CD8-positive, alpha-beta memory T cell (primary cell): ENCODE measurements at regions of chr2 and their contacts with region 1.

Region 1: GRCh38 chr2:38602732-38603401 is at the start of gene HNRNPLL:
- DNase-seq: peak; percentile 87 to 95 (median 89)
- H3K4me3 ChIP-seq: peak within 1 kb of the TSS; percentile 93
- H3K4me3 Mint-ChIP-seq: peak within 1 kb of the TSS; percentile 94 to 97 (median 96)
- H3K27ac ChIP-seq: peak within 1 kb of the TSS; percentile 82
- H3K27ac Mint-ChIP-seq: peak within 1 kb of the TSS; percentile 88 to 99 (median 97)
- H3K4me1 ChIP-seq: peaks cover 22% of the 10 kb centered on the region
- H3K4me1 Mint-ChIP-seq: peaks cover 45 to 58% (median 53%) of the 10 kb centered on the region in 3 donors
- H3K27me3 ChIP-seq: no peaks in the 10 kb centered on the region
- H3K27me3 Mint-ChIP-seq: peaks cover 0 to 2% of the 10 kb centered on the region in 2 donors
- total RNA-seq, gene HNRNPLL: 77.4 to 80.8 TPM

Region 2: DNA sequence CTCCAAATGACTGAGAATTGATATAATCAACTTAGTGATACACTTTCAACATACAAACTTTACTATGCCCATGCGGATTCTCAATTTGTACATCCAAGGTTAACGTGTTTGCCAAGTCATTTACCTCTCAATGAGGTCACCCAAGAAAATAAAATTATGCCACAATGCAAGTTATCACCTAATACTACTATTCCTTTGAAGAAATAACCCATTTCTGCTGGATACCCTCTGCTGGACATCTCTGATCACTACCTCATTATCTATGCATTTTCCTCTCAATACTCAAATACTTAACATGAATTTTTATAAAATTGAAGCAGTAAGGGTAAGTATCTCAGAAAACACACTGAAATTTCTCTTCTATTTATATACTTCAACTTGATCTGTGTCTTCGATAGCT is 12.8 kb before region 1 on chr2:
- CTCF ChIA-PET with region 1: interaction called, 96 read pairs
- POLR2A ChIA-PET with region 1: interaction called, 6 read pairs
- DNase-seq: no peak
- H3K4me3 ChIP-seq: no peak overlapping the region
- H3K4me3 Mint-ChIP-seq: peak overlapping the region; percentile 17 to 78 (median 72)
- H3K27ac ChIP-seq: peak overlapping the region; percentile 6
- H3K27ac Mint-ChIP-seq: peak overlapping the region; percentile 30 to 88 (median 72)
- H3K4me1 ChIP-seq: peaks cover 9% of the 10 kb centered on the region
- H3K4me1 Mint-ChIP-seq: peaks cover 67 to 84% (median 84%) of the 10 kb centered on the region in 3 donors
- H3K27me3 ChIP-seq: no peaks in the 10 kb centered on the region
- H3K27me3 Mint-ChIP-seq: no peaks in the 10 kb centered on the region

Region 3: DNA sequence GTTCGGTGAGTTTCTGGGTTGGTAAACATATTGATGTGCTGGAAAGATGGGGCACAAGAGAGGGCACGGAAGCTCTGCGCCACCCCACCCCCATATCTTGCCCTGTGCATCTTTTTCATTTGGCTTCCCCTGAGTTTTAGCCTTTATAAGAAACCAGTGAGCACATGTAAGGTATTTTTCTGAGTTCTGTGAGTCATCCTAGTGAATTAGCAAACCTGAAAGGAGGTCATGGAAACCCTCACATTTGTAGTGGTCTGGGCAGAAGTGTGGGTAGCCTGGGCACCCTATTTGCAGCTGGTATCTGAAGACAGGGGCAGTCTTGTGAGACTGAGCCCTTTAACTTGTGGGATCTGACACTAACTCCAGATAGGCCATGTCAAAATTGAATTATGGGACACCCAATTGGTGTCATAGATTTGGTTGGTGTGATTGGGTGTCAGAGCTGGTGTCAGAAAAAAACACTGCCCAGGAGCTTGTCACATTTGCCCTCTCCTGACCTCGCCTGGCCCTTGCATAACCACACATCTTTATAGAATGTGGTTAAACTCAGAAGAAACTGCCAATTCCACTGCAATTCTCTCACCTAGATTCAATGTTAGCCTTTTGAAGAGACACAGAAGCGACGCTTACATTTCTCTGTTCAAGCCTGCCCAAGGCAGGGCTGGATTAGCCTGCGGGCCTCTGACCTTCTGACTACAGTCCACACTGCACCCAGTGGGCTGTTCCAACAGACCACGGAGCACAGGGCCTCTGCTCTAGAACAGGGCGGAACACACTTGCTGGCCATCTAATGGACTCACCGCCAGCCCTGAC is 51.1 kb after region 1 on chr2:
- CTCF ChIA-PET with region 1: interaction called, 24 read pairs
- POLR2A ChIA-PET with region 1: interaction called, 5 read pairs
- DNase-seq: peak in 4 of 5 donors; percentile 25 to 65 (median 34)
- H3K4me3 ChIP-seq: peak overlapping the region; percentile 13
- H3K4me3 Mint-ChIP-seq: peak overlapping the region; percentile 1 to 87 (median 70)
- H3K27ac ChIP-seq: peak overlapping the region; percentile 20
- H3K27ac Mint-ChIP-seq: peak overlapping the region; percentile 85 to 98 (median 94)
- H3K4me1 ChIP-seq: peaks cover 29% of the 10 kb centered on the region
- H3K4me1 Mint-ChIP-seq: peaks cover 30 to 59% (median 51%) of the 10 kb centered on the region in 3 donors
- H3K27me3 ChIP-seq: no peaks in the 10 kb centered on the region
- H3K27me3 Mint-ChIP-seq: no peaks in the 10 kb centered on the region

Region 4: DNA sequence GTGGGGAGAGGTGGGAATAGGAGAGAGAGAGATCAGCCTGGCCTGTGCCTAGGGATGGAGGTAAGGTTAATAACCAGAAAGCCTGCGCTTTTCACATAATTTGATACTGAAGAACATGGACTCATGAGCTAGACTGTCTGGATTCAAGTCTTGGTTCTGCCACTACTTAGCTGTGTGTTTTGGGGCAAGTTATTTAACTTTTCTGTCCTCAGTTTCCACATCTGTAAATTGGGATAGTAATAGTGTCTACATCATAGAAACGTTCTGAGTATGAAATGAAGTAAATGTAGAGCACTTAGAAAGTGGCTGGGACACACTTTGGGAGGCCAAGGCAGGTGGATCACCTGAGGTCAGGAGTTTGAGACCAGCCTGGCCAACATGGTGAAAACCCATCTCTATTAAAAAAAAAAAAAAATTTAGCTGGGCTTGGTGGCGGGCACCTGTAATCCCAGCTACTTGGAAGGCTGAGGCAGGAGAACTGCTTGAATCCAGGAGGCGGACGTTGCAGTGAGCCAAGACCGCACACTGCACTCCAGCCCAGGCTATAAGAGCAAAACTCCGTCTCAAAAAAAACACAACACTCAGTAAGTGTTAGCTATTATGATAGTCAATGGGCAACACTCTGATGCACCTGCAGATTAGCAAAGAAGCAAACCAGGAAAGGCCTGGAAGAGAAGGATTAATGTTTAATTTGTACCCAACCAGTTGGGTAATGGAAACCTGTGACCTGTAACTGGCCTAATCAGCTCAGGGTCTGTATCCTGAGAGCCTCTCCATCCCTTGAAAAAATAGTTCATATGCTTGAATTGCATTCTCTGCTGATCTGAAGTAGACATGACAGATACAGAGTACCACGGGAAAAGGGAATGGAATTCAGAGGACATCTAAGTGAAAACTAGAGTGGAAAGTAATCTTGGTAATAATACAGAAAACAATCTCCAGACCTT is 69.9 kb after region 1 on chr2:
- CTCF ChIA-PET with region 1: interaction called, 36 read pairs
- POLR2A ChIA-PET with region 1: interaction called, 57 read pairs
- DNase-seq: no peak
- H3K4me3 ChIP-seq: no peak overlapping the region
- H3K4me3 Mint-ChIP-seq: peak overlapping the region in 5 of 7 donors; percentile 20 to 59 (median 53)
- H3K27ac ChIP-seq: no peak overlapping the region
- H3K27ac Mint-ChIP-seq: peak overlapping the region; percentile 57 to 92 (median 82)
- H3K4me1 ChIP-seq: peaks cover 33% of the 10 kb centered on the region
- H3K4me1 Mint-ChIP-seq: peaks cover 59 to 83% (median 80%) of the 10 kb centered on the region in 3 donors
- H3K27me3 ChIP-seq: no peaks in the 10 kb centered on the region
- H3K27me3 Mint-ChIP-seq: no peaks in the 10 kb centered on the region

Region 5: GRCh38 chr2:38697125-38697840 is 94.4 kb after region 1 on chr2:
- CTCF ChIA-PET with region 1: interaction called, 35 read pairs
- POLR2A ChIA-PET with region 1: no interaction called
- DNase-seq: peak in 4 of 5 donors; percentile 38 to 83 (median 60)
- H3K4me3 ChIP-seq: no peak overlapping the region
- H3K4me3 Mint-ChIP-seq: peak overlapping the region; percentile 60 to 81 (median 72)
- H3K27ac ChIP-seq: peak overlapping the region; percentile 61
- H3K27ac Mint-ChIP-seq: peak overlapping the region; percentile 93 to 100 (median 97)
- H3K4me1 ChIP-seq: peaks cover 60% of the 10 kb centered on the region
- H3K4me1 Mint-ChIP-seq: peaks cover 74 to 91% (median 90%) of the 10 kb centered on the region in 3 donors
- H3K27me3 ChIP-seq: no peaks in the 10 kb centered on the region
- H3K27me3 Mint-ChIP-seq: no peaks in the 10 kb centered on the region

Region 6: GRCh38 chr2:38720613-38721241 is 117.9 kb after region 1 on chr2:
- CTCF ChIA-PET with region 1: interaction called, 31 read pairs
- POLR2A ChIA-PET with region 1: interaction called, 3 read pairs
- DNase-seq: no peak
- H3K4me3 ChIP-seq: no peak overlapping the region
- H3K4me3 Mint-ChIP-seq: peak overlapping the region in 3 of 7 donors; percentile 4 to 12 (median 6)
- H3K27ac ChIP-seq: no peak overlapping the region
- H3K27ac Mint-ChIP-seq: peak overlapping the region; percentile 65 to 94 (median 84)
- H3K4me1 ChIP-seq: peaks cover 19% of the 10 kb centered on the region
- H3K4me1 Mint-ChIP-seq: peaks cover 42 to 64% (median 58%) of the 10 kb centered on the region in 3 donors
- H3K27me3 ChIP-seq: no peaks in the 10 kb centered on the region
- H3K27me3 Mint-ChIP-seq: no peaks in the 10 kb centered on the region

Region 7: GRCh38 chr2:38750891-38751595 is 148.2 kb after region 1 on chr2 and contains the start of gene SRSF7:
- CTCF ChIA-PET with region 1: interaction called, 18 read pairs
- POLR2A ChIA-PET with region 1: interaction called, 41 read pairs
- DNase-seq: peak; percentile 95 to 99 (median 96)
- H3K4me3 ChIP-seq: peak within 1 kb of the TSS; percentile 96
- H3K4me3 Mint-ChIP-seq: peak within 1 kb of the TSS; percentile 95 to 100 (median 99)
- H3K27ac ChIP-seq: peak within 1 kb of the TSS; percentile 98
- H3K27ac Mint-ChIP-seq: peak within 1 kb of the TSS; percentile 98 to 100 (median 100)
- H3K4me1 ChIP-seq: peaks cover 55% of the 10 kb centered on the region
- H3K4me1 Mint-ChIP-seq: peaks cover 61 to 67% (median 65%) of the 10 kb centered on the region in 3 donors
- H3K27me3 ChIP-seq: no peaks in the 10 kb centered on the region
- H3K27me3 Mint-ChIP-seq: peaks cover 0 to 18% of the 10 kb centered on the region in 2 donors
- total RNA-seq, gene SRSF7: 378 to 381 TPM

Region 8: DNA sequence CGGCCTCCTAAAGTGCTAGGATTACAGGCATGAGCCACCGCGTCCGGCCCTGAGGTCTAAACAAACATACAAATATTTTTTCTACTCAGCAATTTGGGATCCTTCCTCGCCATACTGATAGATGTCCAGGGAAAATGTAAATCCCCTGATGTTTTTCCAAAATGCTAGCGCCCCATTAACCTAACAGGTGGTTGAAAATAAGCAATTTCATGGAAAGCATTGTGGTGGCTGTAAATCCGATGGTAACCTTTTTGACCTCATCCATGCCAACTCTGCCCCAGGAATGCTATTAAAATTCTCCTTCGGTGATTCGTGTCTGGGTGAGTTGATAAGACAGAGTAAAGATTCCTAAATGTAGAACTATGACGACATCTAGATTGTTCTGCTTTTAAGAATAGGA is 194.4 kb after region 1 on chr2:
- CTCF ChIA-PET with region 1: no interaction called
- POLR2A ChIA-PET with region 1: no interaction called
- DNase-seq: no peak
- H3K4me3 ChIP-seq: no peak overlapping the region
- H3K4me3 Mint-ChIP-seq: no peak overlapping the region
- H3K27ac ChIP-seq: no peak overlapping the region
- H3K27ac Mint-ChIP-seq: no peak overlapping the region
- H3K4me1 ChIP-seq: no peaks in the 10 kb centered on the region
- H3K4me1 Mint-ChIP-seq: no peaks in the 10 kb centered on the region
- H3K27me3 ChIP-seq: no peaks in the 10 kb centered on the region
- H3K27me3 Mint-ChIP-seq: peaks cover 0 to under 1% of the 10 kb centered on the region in 2 donors